ENCODE measurements at regions of chr21 and their contacts with region 1.

Region 1: GRCh38 chr21:29078869-29079767 is 5.7 kb upstream of the CCT8 start:
- DNase-seq: no peak
- H3K4me3 ChIP-seq: no peak overlapping the region
- CTCF ChIP-seq: no peak

Region 2: DNA sequence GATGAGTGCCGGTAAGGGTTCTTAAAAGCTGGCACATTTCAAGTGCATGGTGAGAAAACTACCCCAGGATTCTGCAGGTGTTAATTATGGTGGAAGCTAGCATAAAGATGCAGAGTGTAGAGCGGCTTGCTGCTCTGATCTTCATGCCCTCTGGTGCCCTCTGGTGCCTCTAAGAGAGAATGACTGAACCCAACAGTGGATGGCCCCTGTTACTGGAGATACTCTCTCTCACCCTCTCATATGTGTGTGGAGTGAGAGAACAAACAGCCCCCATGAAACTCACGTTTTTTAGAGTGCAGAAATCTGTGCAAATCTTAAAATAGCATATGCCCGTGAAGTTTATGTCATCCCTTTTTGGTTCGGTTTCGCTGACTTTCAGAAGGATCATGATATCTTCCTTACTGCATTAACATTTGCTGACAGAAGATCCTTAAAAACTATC is 770.6 kb after region 1 on chr21:
- in situ Hi-C with region 1: loop called (anchors 25 kb)
- DNase-seq: peak; percentile 44
- H3K4me3 ChIP-seq: no peak overlapping the region
- CTCF ChIP-seq: peak; percentile 84